H1 (cell line): ENCODE measurements at regions of chr2 and their contacts with region 1.

Region 1: GRCh38 chr2:27322766-27323595 is at the start of gene MPV17:
- DNase-seq: peak; percentile 80 to 88
- H3K4me3 ChIP-seq: peak within 1 kb of the TSS; percentile 85 to 99 (median 88)
- H3K27ac ChIP-seq: peak within 1 kb of the TSS; percentile 94
- H3K4me1 ChIP-seq: peaks cover 0 to 10% (median 0%) of the 10 kb centered on the region in 4 experiments; a peak in 4 of 7 replicates
- H3K27me3 ChIP-seq: no peaks in the 10 kb centered on the region
- CTCF ChIP-seq: no peak
- EP300 ChIP-seq: no peak
- POLR2A ChIP-seq: peak; percentile 91 to 98
- RAD21 ChIP-seq: no peak
- total RNA-seq, gene MPV17: 45.2 and 46.1 TPM in 2 replicates

Region 2: GRCh38 chr2:27271631-27272340 is 51.2 kb before region 1 on chr2:
- CTCF ChIA-PET with region 1: interaction called, 11 read pairs
- POLR2A ChIA-PET with region 1: interaction called, 3 read pairs
- DNase-seq: no peak
- H3K4me3 ChIP-seq: no peak overlapping the region
- H3K27ac ChIP-seq: no peak overlapping the region
- H3K4me1 ChIP-seq: peaks cover 0 to 5% (median 0%) of the 10 kb centered on the region in 4 experiments; a peak in 2 of 7 replicates
- H3K27me3 ChIP-seq: peaks cover 0 to 7% (median 2%) of the 10 kb centered on the region in 4 experiments; a peak in 2 of 7 replicates
- CTCF ChIP-seq: no peak
- EP300 ChIP-seq: no peak
- POLR2A ChIP-seq: no peak
- RAD21 ChIP-seq: no peak

Region 3: DNA sequence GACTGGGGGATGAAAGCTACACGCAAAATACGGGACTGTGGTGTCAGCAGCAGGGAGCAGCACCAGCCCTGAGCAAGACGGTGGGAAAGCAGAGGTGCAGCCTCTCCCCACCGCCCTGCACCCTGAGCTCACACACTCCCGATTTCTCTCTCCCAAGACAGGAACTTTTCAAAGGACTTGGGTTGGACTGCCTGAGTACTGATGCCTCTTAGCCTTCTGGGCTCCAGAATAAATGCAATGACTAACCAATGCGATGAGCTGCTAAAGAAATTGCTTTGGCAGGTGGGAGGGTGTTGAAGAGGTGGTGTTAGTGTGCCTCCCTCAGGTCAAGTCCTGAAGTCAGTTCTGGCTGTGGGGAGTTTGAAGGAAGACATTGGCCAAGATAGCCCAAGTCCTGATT is 31.1 kb before region 1 on chr2:
- CTCF ChIA-PET with region 1: interaction called, 11 read pairs
- POLR2A ChIA-PET with region 1: no interaction called
- DNase-seq: no peak
- H3K4me3 ChIP-seq: no peak overlapping the region
- H3K27ac ChIP-seq: no peak overlapping the region
- H3K4me1 ChIP-seq: peaks cover 0 to 4% (median 2%) of the 10 kb centered on the region in 4 experiments; a peak in 3 of 7 replicates
- H3K27me3 ChIP-seq: no peaks in the 10 kb centered on the region; a peak in 1 of 7 replicates
- CTCF ChIP-seq: peak; percentile 59 to 74 (median 70)
- EP300 ChIP-seq: no peak
- POLR2A ChIP-seq: no peak
- RAD21 ChIP-seq: peak; percentile 80 to 87

Region 4: DNA sequence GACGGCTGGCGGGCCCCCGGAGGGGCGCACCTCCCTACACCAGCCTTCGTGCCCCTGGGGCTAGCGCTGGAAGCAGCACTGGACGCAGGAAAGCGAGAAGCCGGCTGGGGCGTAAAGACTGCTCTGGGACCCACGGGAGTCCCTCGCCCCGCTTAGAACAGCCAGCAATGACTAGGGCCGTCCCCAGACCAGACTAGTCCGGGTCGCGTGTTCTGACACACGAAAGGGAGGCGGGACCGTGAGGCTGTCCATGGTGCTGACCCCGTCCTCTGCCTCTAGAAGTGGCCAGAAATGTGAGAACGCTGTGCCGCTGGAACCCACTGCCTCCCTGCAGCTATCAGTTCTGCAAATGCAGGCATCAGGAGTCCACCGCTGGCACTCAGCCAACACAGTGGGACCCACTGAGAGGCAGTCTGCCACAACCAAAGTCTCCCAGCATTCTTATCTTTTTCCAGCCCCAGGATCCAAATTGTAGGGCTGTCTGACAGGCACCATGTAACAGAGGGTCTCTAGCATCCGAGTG is 14.6 kb before region 1 on chr2 and contains the start of gene UCN:
- CTCF ChIA-PET with region 1: interaction called, 128 read pairs
- POLR2A ChIA-PET with region 1: interaction called, 105 read pairs
- DNase-seq: peak in 1 of 2 experiments; percentile 87
- H3K4me3 ChIP-seq: peak within 1 kb of the TSS in 3 of 4 experiments; percentile 26 to 51 (median 34); a peak in 4 of 8 replicates
- H3K27ac ChIP-seq: no peak within 1 kb of the TSS
- H3K4me1 ChIP-seq: peaks cover 0 to 26% (median 14%) of the 10 kb centered on the region in 4 experiments; a peak in 5 of 7 replicates
- H3K27me3 ChIP-seq: peaks cover 29 to 41% (median 39%) of the 10 kb centered on the region in 4 experiments
- CTCF ChIP-seq: no peak
- EP300 ChIP-seq: no peak
- POLR2A ChIP-seq: no peak
- RAD21 ChIP-seq: no peak
- total RNA-seq, gene UCN: not detected in 2 replicates

Region 5: DNA sequence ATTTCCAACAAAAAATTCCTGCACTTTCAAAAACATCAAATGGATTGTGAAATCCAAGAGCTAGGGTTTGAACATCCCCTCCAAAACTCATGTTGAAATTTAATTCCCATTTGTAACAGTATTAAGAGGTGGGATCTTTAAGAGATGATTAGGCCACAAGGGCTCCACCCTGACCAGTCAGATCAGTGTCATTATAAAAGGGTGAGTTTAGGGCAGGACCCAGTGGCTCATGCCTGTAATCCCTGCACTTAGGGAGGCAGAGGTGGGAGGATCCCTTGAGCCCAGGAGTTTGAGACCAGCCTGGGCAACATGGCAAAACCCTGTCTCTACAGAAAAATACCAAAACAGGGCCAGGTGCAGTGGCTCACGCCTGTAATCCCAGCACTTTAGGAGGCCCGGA is 24.7 kb after region 1 on chr2:
- CTCF ChIA-PET with region 1: interaction called, 10 read pairs
- POLR2A ChIA-PET with region 1: interaction called, 31 read pairs
- DNase-seq: no peak
- H3K4me3 ChIP-seq: no peak overlapping the region
- H3K27ac ChIP-seq: no peak overlapping the region
- H3K4me1 ChIP-seq: no peaks in the 10 kb centered on the region
- H3K27me3 ChIP-seq: no peaks in the 10 kb centered on the region
- CTCF ChIP-seq: no peak
- EP300 ChIP-seq: no peak
- POLR2A ChIP-seq: no peak
- RAD21 ChIP-seq: no peak

Region 6: DNA sequence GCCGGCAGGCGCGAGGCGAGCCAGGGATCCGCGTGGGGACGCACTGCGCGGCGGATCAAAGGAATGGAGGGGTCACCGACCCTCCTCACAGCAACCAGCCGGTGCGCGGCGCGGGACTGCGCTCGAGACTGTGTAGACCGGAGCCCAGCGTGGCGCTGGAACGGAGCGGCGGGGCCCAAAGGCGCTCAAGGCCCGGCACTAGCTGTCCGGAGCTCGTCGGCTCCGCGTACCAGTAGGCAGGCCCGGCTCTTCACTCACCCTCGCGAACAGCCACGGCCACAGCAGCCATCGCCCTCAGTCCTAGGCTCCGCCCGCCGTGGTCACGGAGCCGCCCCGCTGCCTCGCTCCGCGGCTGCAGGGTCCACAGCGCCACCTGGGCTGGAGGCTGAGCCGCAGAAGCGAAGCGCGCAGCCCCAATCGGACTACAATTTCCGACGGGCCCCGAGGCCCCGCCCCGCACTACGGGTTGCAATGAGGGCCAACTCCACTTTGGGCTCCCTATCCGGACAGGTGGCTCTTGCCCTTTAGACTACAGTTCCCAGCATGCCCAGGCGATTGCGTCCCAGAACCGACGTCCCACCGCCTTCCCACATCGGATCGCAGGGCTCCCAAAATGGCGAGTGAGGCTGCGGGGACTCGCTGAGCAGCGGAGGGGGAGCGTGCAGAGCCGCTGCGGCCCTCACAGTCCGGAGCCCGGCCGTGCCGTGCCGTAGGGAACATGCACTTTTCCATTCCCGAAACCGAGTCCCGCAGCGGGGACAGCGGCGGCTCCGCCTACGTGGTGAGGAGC is 47.2 kb after region 1 on chr2 and contains the starts of genes EIF2B4 and SNX17:
- CTCF ChIA-PET with region 1: interaction called, 5 read pairs
- POLR2A ChIA-PET with region 1: interaction called, 18 read pairs
- DNase-seq: peak; percentile 98 to 99
- H3K4me3 ChIP-seq: peak within 1 kb of the TSS; percentile 72 to 99 (median 88)
- H3K27ac ChIP-seq: peak within 1 kb of the TSS; percentile 62
- H3K4me1 ChIP-seq: peaks cover 0 to 4% (median 2%) of the 10 kb centered on the region in 4 experiments; a peak in 4 of 7 replicates
- H3K27me3 ChIP-seq: no peaks in the 10 kb centered on the region
- CTCF ChIP-seq: peak in 2 of 3 experiments; percentile 71 to 87; a peak in 3 of 4 replicates
- EP300 ChIP-seq: peak in 1 of 2 experiments; percentile 42; a peak in 1 of 3 replicates
- POLR2A ChIP-seq: peak in 1 of 2 experiments; percentile 84; a peak in 2 of 3 replicates
- RAD21 ChIP-seq: peak; percentile 50 to 58; a peak in 3 of 4 replicates
- total RNA-seq, gene EIF2B4: 63.2 and 66.0 TPM in 2 replicates
- total RNA-seq, gene SNX17: 54.9 and 59.1 TPM in 2 replicates